Activated CD4-positive, alpha-beta T cell treated with anti-CD3 and anti-CD28 coated beads for 36 hours (primary cell): ENCODE measurements at regions of chr1 and their contacts with region 1.

Region 1: GRCh38 chr1:151968058-151968457 is 25.6 kb downstream of the S100A10 start:
- DNase-seq: peak; percentile 63
- ATAC-seq: peak; percentile 78
- H3K4me3 Mint-ChIP-seq: no peak overlapping the region
- H3K27ac Mint-ChIP-seq: no peak overlapping the region
- H3K4me1 Mint-ChIP-seq: peaks cover 18% of the 10 kb centered on the region
- H3K27me3 Mint-ChIP-seq: no peaks in the 10 kb centered on the region

Region 2: DNA sequence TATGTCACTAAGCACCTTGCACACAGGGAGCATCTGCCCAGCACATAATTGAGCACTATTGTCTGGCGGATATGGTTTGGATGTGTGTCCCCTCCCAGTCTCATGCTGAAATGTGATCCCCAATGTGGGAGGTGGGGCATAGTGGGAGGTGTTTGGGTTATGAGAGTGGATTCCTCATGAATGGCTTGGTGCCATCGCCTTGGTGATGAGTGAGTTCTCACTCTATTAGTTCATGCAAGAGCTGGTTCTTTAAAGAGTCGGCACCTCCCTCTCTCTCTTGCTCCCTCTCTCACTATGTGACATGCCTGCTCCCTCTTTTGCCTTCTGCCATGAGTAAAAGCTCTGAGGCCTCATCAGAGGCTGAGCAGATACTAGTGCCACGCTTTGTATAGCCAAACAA is 1169.5 kb before region 1 on chr1:
- CTCF ChIA-PET with region 1: no interaction called
- POLR2A ChIA-PET with region 1: no interaction called
- intact Hi-C with region 1: no loop called
- DNase-seq: no peak
- ATAC-seq: no peak
- H3K4me3 Mint-ChIP-seq: no peak overlapping the region
- H3K27ac Mint-ChIP-seq: no peak overlapping the region
- H3K4me1 Mint-ChIP-seq: no peaks in the 10 kb centered on the region
- H3K27me3 Mint-ChIP-seq: no peaks in the 10 kb centered on the region

Region 3: DNA sequence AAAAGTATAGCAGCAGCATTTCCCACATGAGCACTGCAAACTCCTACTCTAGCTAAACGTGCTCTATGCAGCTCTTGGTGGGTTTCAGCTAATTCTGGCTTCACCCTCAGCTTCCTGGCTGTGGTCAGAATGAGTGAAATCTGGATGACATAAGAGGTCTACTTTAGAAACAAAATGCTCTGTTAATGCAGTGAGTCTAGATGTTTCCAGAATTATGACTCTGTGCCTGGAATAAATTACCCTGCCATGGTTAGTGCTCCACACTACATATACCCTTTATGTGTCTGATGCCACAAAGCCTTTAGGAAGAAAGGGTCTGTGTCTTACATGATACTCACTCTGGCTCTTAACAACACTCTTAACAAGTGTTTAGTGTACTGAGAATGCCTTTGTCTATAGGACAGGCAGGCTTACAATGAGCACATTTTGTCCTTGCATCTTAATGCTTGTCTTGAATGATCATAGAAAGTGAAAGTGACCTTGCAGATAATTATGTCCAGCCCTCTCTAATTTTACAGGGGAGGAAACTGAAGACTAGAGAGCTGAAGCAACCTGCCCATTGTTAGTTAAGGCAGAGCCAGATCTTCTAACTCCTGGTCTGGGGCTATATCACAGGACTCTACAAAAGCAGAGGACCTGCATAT is 16.4 kb after region 1 on chr1:
- CTCF ChIA-PET with region 1: interaction called, 60 read pairs
- POLR2A ChIA-PET with region 1: interaction called, 10 read pairs
- intact Hi-C with region 1: loop called in 1 of 2 experiments (anchors 1 kb)
- DNase-seq: peak; percentile 67
- ATAC-seq: peak; percentile 92
- H3K4me3 Mint-ChIP-seq: peak overlapping the region; percentile 28
- H3K27ac Mint-ChIP-seq: peak overlapping the region; percentile 78
- H3K4me1 Mint-ChIP-seq: peaks cover 60% of the 10 kb centered on the region
- H3K27me3 Mint-ChIP-seq: no peaks in the 10 kb centered on the region

Region 4: DNA sequence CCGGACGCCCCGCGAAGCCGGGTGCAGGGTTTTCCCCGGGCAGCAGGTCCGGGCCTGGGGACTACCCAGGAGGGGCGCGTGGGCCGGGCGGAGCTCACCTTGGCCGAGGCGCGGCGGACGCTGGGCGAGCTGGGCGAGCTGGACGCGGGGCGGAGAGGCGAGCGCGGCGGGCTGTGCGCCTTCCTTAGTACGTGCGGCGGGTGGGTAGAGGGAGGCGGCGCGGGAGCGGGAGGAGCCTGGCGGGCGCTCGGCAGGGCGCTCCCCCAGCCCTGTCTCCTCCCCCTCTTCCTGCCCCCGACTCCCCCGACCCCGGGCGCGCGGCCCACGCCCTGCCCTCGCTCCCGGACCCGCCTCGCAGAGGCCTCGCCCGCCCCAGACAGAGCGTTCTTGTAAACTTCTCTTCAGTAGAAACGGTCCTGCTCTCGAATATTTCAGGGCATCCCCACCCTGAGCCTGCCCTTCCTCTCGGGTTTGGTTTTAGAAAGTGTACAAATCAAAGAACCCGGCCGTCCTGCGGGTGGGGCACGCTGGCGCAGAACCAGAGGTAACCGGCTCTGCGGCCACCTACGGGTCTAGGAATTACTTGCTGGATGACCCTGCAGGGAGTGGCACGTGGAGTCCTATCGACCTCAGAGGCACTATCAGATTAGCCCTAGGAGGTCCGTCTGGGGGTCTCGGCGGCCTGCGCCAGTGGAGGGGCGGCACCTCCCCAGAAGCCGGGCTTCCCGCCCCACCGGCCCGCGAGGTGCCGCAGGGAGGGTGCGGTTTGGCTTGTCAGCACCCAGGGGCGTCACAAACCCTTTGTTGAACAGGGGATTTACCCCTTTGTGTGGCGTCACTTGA is 25.8 kb after region 1 on chr1 and contains the start of gene S100A10:
- CTCF ChIA-PET with region 1: interaction called, 172 read pairs
- POLR2A ChIA-PET with region 1: no interaction called
- intact Hi-C with region 1: loop called (anchors 1 kb)
- DNase-seq: peak; percentile 85
- ATAC-seq: peak; percentile 79
- H3K4me3 Mint-ChIP-seq: peak within 1 kb of the TSS; percentile 90
- H3K27ac Mint-ChIP-seq: peak within 1 kb of the TSS; percentile 94
- H3K4me1 Mint-ChIP-seq: peaks cover 48% of the 10 kb centered on the region
- H3K27me3 Mint-ChIP-seq: no peaks in the 10 kb centered on the region
- total RNA-seq, gene S100A10: 230 to 246 TPM

Region 5: DNA sequence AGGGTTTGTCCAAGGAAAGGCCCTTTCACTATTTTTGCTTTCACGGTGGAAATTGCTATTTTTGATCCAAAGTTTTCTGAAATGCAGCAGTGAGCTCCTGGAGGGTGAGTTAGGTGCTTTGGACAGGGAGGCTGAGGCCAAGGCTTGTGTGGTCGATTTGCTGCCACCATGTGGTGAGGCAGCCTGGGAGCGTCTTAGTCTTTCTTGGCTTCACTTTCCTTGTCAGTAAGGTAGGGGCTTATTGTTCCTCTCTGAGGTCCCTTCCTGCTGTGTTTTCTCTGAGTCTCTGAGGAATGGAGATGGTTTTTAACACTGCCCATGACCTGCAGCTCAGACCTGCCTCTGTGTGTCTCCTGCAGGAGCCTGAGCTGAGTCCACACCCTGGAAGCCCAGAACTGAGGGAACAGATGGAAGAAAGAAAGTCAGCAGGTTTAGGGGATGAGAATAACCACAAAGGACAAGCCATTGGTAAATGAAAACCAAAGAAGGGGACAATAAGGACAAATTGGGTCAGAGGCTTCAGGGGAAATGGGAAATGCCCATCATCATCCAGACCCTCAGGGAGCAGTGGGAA is 45.7 kb after region 1 on chr1:
- CTCF ChIA-PET with region 1: interaction called, 23 read pairs
- POLR2A ChIA-PET with region 1: no interaction called
- intact Hi-C with region 1: loop called in 1 of 2 experiments (anchors 1 kb)
- DNase-seq: peak; percentile 72
- ATAC-seq: peak; percentile 49
- H3K4me3 Mint-ChIP-seq: no peak overlapping the region
- H3K27ac Mint-ChIP-seq: no peak overlapping the region
- H3K4me1 Mint-ChIP-seq: peaks cover 3% of the 10 kb centered on the region
- H3K27me3 Mint-ChIP-seq: peaks cover 9% of the 10 kb centered on the region